Dorsolateral prefrontal cortex (tissue), 120 donors: ENCODE measurements at regions of chr2 and their contacts with region 1.

Region 1: DNA sequence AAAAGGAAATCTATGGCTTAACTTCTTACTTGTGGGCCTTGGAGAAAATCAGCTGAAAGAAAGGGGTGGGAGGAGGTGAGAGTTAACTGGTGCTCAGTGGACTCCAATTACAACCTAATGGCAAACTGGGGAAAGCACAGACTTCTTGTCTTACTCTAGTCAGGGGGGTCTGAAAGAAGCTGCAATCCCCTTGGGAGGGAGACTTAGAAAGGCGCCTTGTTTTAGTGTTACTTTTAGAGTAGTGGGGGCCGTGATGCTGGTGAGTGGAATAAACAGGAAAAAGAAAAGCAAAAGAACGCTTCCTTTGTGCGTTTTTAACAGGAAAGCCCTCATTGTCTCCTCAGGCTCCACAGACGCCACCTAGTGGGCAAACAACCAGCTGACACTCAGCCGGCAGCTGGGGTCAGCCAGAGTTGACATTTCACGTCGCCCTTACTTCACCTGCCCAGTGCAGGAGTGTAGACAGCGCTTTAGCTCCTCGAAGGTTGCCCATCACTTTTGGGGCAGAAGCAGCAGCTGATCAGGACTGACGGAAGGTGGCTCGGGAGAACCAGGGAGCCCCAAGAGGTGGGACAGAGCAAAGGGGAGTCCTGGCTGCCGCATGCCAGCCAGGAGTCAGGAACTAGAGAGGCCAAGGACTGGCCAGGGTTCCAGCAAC is 55.9 kb upstream of the GORASP2 start:
- DNase-seq: peak in 9 of 10 donors; percentile 23 to 71 (median 55)
- H3K4me3 ChIP-seq: peak overlapping the region in 51 of 59 donors; percentile 7 to 60 (median 35)
- H3K27ac ChIP-seq: peak overlapping the region in 2 of 59 donors; percentile 44 to 48
- H3K27me3 ChIP-seq: peaks cover 0 to 4% (median 0%) of the 10 kb centered on the region in 45 donors
- CTCF ChIP-seq: peak; percentile 58 to 89 (median 82)

Region 2: GRCh38 chr2:170235860-170236679 is 637.1 kb before region 1 on chr2:
- intact Hi-C with region 1: loop called in 1 of 2 experiments (anchors 10 kb)
- DNase-seq: no peak
- H3K4me3 ChIP-seq: peak overlapping the region in 12 of 59 donors; percentile 0 to 35 (median 24)
- H3K27ac ChIP-seq: peak overlapping the region in 4 of 59 donors; percentile 3 to 27 (median 14)
- H3K27me3 ChIP-seq: peaks cover 0 to 9% (median 0%) of the 10 kb centered on the region in 45 donors
- CTCF ChIP-seq: peak in 55 of 56 donors; percentile 31 to 78 (median 62)